ENCODE measurements at regions of chr11 and their contacts with region 1.

Region 1: GRCh38 chr11:125874556-125875124 is 12.8 kb upstream of the HYLS1 start:
- DNase-seq: peak; percentile 74
- H3K4me3 Mint-ChIP-seq: no peak overlapping the region
- H3K27ac Mint-ChIP-seq: no peak overlapping the region
- H3K4me1 Mint-ChIP-seq: no peaks in the 10 kb centered on the region
- H3K27me3 Mint-ChIP-seq: peaks cover 1% of the 10 kb centered on the region

Region 2: DNA sequence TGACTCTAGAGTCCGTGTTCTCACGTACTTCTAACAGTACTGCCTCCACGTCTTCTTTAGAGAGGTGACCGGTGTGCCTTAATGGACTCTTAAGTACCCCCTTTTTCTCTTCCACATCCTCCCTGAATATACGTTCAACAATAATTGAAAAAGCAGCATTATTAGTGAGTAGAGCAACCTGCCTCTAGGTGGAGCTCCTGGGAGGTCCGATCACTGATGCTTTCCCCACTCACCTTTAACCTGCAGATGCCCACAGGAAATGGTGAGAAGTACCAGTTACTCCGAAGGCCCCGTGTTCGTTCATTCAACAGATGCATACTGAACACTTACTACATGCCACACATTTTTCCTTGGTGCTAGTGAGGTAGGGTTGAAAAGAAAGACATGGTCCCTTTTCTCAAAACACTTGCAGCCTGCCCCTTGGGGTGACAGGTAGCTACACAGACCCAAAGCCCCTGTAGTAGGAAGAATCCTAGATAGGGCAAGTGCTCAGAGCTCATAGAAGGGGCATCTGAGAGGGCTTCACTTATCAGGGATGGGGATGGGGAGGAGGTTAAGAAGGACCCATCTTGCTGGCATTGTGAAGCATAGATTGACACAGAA is 451.3 kb before region 1 on chr11:
- CTCF ChIA-PET with region 1: no interaction called
- intact Hi-C with region 1: loop called (anchors 1 kb)
- DNase-seq: peak; percentile 45
- H3K4me3 Mint-ChIP-seq: no peak overlapping the region
- H3K27ac Mint-ChIP-seq: no peak overlapping the region
- H3K4me1 Mint-ChIP-seq: no peaks in the 10 kb centered on the region
- H3K27me3 Mint-ChIP-seq: no peaks in the 10 kb centered on the region

Region 3: DNA sequence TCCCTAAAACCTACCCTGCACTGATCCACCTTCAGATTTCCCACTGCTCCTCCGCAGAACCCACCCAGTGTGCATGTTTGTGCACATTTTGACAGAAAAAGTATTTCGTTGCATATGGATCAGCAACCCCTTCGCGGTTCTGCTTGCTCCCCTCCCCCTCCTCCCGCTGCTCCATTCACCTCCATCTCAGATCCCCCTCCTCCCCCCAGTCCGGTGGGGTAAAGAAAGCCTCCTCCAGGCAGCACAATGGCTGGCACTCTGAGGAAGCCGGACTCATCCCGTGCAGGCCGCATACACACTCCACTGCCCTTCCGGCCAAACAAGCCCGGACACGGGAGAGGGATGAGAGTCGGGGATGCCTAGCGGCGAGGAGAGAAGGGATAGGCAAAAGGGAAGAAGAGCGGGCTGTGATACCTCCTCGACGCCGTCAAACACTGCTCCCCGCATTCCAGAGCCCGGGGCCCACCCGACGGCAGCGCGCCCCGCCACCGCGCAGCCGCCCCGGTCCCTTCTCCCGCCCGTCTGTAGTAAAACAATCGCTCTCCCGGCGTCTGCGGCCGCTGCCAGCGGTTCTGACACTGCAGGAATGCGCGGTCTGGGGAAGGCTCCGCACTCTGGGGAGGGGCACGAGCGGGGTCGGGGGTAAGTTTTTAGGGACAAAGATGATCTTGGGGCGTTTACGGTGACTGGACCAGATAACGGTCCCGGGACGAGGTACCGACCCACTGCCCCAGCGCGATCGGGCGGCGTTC is 379.5 kb before region 1 on chr11:
- CTCF ChIA-PET with region 1: no interaction called
- intact Hi-C with region 1: loop called (anchors 5 kb)
- DNase-seq: no peak
- H3K4me3 Mint-ChIP-seq: peak overlapping the region; percentile 78
- H3K27ac Mint-ChIP-seq: no peak overlapping the region
- H3K4me1 Mint-ChIP-seq: peaks cover 19% of the 10 kb centered on the region
- H3K27me3 Mint-ChIP-seq: peaks cover 41% of the 10 kb centered on the region

Region 4: DNA sequence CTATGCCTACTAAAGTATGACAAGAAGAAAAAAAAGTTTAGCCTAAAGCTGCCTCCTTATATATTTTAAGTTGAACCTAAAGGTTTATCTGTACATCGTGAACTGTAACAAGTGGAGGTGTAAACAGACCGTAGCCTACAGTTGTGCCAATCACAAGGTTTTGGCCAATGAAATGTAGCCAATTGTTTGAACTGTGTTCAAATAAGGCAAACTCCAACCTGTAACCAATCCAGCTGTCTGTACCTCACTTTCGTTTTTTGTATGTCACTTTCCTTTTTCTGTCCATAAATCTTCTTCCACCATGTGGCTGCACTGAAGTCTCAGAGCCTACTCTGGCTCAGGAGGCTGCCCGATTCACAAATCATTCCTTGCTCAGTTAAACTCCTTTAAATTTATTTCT is 312.2 kb before region 1 on chr11:
- CTCF ChIA-PET with region 1: no interaction called
- intact Hi-C with region 1: no loop called
- DNase-seq: no peak
- H3K4me3 Mint-ChIP-seq: no peak overlapping the region
- H3K27ac Mint-ChIP-seq: no peak overlapping the region
- H3K4me1 Mint-ChIP-seq: no peaks in the 10 kb centered on the region
- H3K27me3 Mint-ChIP-seq: no peaks in the 10 kb centered on the region

Region 5: DNA sequence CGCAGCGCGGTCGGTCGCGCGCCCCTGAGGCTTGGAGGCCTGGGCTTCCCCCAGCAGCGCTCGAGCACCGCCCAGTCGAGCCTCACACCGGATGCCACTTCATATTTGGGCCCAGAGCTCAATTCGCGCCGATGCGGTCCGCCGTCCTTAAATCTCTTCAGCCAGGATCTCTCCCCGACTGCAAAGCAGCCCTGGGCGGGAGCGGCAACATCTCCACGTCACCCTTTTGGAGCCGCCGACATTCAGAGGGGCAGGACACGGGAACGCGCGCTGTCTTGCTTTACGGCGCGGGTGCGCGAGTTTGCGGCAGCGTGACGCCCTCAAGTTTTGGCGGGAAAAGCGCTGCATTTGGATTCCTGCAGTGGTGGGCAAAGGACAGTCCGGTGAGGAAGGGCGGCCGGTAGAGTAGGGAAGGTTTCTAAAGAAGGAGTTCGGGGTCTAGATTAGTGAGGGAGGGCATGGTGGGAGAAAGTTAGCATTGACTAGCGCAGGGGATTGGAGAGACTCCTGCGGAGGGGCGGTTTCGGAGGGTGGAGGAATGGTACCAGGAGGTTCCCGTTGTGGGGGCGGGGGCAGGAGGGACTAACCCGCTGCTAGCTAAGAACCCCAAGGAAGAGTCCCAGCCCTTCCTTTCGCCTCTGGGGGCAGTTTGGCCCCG is 248.9 kb before region 1 on chr11:
- CTCF ChIA-PET with region 1: no interaction called
- intact Hi-C with region 1: loop called (anchors 1 kb)
- DNase-seq: peak; percentile 90
- H3K4me3 Mint-ChIP-seq: peak overlapping the region; percentile 89
- H3K27ac Mint-ChIP-seq: peak overlapping the region; percentile 99
- H3K4me1 Mint-ChIP-seq: peaks cover 21% of the 10 kb centered on the region
- H3K27me3 Mint-ChIP-seq: no peaks in the 10 kb centered on the region

Region 6: DNA sequence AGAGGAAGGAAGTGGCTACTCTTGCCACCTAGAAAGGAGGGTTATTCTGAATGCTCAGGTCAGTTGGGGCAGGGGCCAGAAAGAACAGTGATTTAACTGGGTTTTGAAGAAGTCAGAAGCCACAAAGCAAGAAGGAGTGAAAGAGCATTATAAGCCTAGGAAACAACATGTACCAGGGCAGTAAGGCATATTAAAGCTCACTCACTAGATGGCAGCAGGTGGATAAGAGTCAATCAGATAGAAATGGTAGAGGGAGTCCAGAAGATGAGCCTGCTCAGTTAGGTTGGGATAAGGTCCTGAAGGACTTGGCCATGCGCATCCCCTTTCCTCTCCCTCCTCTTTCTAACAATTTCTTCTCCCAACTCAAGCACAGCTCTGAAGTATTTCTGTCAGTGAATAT is 150.5 kb before region 1 on chr11:
- CTCF ChIA-PET with region 1: interaction called, 6 read pairs
- intact Hi-C with region 1: loop called (anchors 1 kb)
- DNase-seq: peak; percentile 6
- H3K4me3 Mint-ChIP-seq: no peak overlapping the region
- H3K27ac Mint-ChIP-seq: no peak overlapping the region
- H3K4me1 Mint-ChIP-seq: no peaks in the 10 kb centered on the region
- H3K27me3 Mint-ChIP-seq: peaks cover 11% of the 10 kb centered on the region

Region 7: GRCh38 chr11:125835748-125836147 is 38.9 kb before region 1 on chr11:
- CTCF ChIA-PET with region 1: no interaction called
- intact Hi-C with region 1: no loop called
- DNase-seq: no peak
- H3K4me3 Mint-ChIP-seq: no peak overlapping the region
- H3K27ac Mint-ChIP-seq: no peak overlapping the region
- H3K4me1 Mint-ChIP-seq: no peaks in the 10 kb centered on the region
- H3K27me3 Mint-ChIP-seq: peaks cover 11% of the 10 kb centered on the region

Measured in activated naive CD4-positive, alpha-beta T cell treated with anti-CD3 and anti-CD28 coated beads for 36 hours (primary cell).